Caco-2 (cell line): ENCODE measurements at regions of chr5 and their contacts with region 1.

Region 1: DNA sequence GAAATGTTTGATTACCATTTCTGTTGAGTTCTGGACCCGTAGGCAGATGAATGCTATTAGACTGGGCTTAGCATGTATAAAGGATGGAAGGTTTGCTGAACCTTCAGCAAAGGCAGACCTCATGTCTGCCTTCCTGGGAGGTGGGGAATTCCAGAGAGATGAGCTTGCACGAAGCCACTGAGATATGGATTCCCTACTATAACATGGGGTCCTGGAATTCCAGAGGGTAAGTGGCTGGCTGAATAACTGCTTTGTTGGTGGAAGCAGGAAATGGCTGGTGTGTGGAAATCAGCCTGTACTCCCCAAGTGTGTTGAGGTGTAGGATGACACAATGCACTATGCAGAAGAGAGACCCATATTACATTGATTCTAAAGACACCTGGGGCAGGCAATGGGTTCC is 526.4 kb downstream of the CTNND2 start:
- DNase-seq: no peak
- H3K4me3 ChIP-seq: no peak overlapping the region
- H3K4me3 Mint-ChIP-seq: no peak overlapping the region
- H3K27ac Mint-ChIP-seq: peak overlapping the region; percentile 32
- H3K4me1 ChIP-seq: peaks cover 15% of the 10 kb centered on the region; the same call in 1 of the 2 replicates
- H3K4me1 Mint-ChIP-seq: peaks cover 16% of the 10 kb centered on the region
- H3K27me3 ChIP-seq: no peaks in the 10 kb centered on the region
- H3K27me3 Mint-ChIP-seq: no peaks in the 10 kb centered on the region
- CTCF ChIP-seq: no peak

Region 2: GRCh38 chr5:11504892-11505545 is 127.1 kb after region 1 on chr5:
- CTCF ChIA-PET with region 1: no interaction called
- POLR2A ChIA-PET with region 1: no interaction called
- intact Hi-C with region 1: loop called (anchors 10 kb)
- DNase-seq: no peak
- H3K4me3 ChIP-seq: no peak overlapping the region
- H3K4me3 Mint-ChIP-seq: no peak overlapping the region
- H3K27ac Mint-ChIP-seq: no peak overlapping the region
- H3K4me1 ChIP-seq: peaks cover 35% of the 10 kb centered on the region
- H3K4me1 Mint-ChIP-seq: peaks cover 26% of the 10 kb centered on the region
- H3K27me3 ChIP-seq: no peaks in the 10 kb centered on the region
- H3K27me3 Mint-ChIP-seq: no peaks in the 10 kb centered on the region
- CTCF ChIP-seq: no peak